ENCODE measurements at regions of chr2 and their contacts with region 1.

Region 1: GRCh38 chr2:88669371-88670214 is 21.9 kb upstream of the RPIA start:
- DNase-seq: peak; percentile 53
- H3K4me3 ChIP-seq: no peak overlapping the region
- H3K27ac ChIP-seq: no peak overlapping the region
- H3K4me1 ChIP-seq: no peaks in the 10 kb centered on the region
- H3K27me3 ChIP-seq: no peaks in the 10 kb centered on the region
- CTCF ChIP-seq: peak; percentile 72
- EP300 ChIP-seq: no peak
- RAD21 ChIP-seq: peak; percentile 81

Region 2: GRCh38 chr2:88136817-88137216 is 532.8 kb before region 1 on chr2:
- CTCF ChIA-PET with region 1: no interaction called
- POLR2A ChIA-PET with region 1: no interaction called
- DNase-seq: no peak
- H3K4me3 ChIP-seq: no peak overlapping the region
- H3K27ac ChIP-seq: no peak overlapping the region
- H3K4me1 ChIP-seq: no peaks in the 10 kb centered on the region
- H3K27me3 ChIP-seq: no peaks in the 10 kb centered on the region; the same call in 1 of the 2 replicates
- CTCF ChIP-seq: no peak
- EP300 ChIP-seq: no peak
- RAD21 ChIP-seq: no peak

Region 3: GRCh38 chr2:88574445-88574844 is 95.1 kb before region 1 on chr2:
- CTCF ChIA-PET with region 1: interaction called, 13 read pairs
- POLR2A ChIA-PET with region 1: no interaction called
- DNase-seq: no peak
- H3K4me3 ChIP-seq: no peak overlapping the region
- H3K27ac ChIP-seq: no peak overlapping the region; a peak in 2 of 4 replicates
- H3K4me1 ChIP-seq: 0 out of 4 replicates have a peak, but pooled peaks cover 0 to 5% of the 10 kb centered on the region in 2 experiments
- H3K27me3 ChIP-seq: no peaks in the 10 kb centered on the region
- CTCF ChIP-seq: no peak
- EP300 ChIP-seq: no peak
- RAD21 ChIP-seq: no peak

Region 4: GRCh38 chr2:88590998-88591613 is 78.5 kb before region 1 on chr2:
- CTCF ChIA-PET with region 1: interaction called, 308 read pairs
- POLR2A ChIA-PET with region 1: no interaction called
- DNase-seq: peak; percentile 47
- H3K4me3 ChIP-seq: no peak overlapping the region; a peak in 1 of 4 replicates
- H3K27ac ChIP-seq: peak overlapping the region; percentile 12 to 67; a peak in 3 of 4 replicates
- H3K4me1 ChIP-seq: no peaks in the 10 kb centered on the region; a peak in 1 of 4 replicates
- H3K27me3 ChIP-seq: no peaks in the 10 kb centered on the region
- CTCF ChIP-seq: peak; percentile 91
- EP300 ChIP-seq: no peak
- RAD21 ChIP-seq: peak; percentile 96

Region 5: GRCh38 chr2:88606371-88607030 is 63.1 kb before region 1 on chr2:
- CTCF ChIA-PET with region 1: interaction called, 13 read pairs
- POLR2A ChIA-PET with region 1: no interaction called
- DNase-seq: no peak
- H3K4me3 ChIP-seq: no peak overlapping the region
- H3K27ac ChIP-seq: peak overlapping the region in 1 of 2 experiments; percentile 62; a peak in 2 of 4 replicates
- H3K4me1 ChIP-seq: peaks cover 9 to 30% of the 10 kb centered on the region in 2 experiments
- H3K27me3 ChIP-seq: no peaks in the 10 kb centered on the region
- CTCF ChIP-seq: no peak
- EP300 ChIP-seq: no peak
- RAD21 ChIP-seq: no peak

Region 6: DNA sequence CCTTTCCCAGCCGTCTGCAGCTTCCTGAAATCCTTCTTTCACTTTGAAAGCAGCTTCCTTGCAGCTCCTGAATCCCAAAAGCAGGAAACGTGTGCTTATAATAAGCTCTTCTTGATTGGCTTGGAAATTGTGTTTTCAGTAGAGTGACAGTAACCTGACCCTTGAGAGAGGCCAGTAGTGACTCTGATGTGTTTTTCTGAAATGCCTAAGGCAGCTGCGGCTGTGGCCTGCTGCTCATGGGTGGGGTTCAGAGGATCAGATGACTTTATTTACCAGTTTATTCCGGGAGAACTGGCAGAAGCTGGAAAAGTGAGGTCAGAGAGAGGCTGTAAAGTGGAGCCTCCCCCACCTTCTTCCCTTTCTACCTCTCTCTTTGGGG is 10.1 kb before region 1 on chr2:
- CTCF ChIA-PET with region 1: interaction called, 32 read pairs
- POLR2A ChIA-PET with region 1: no interaction called
- DNase-seq: no peak
- H3K4me3 ChIP-seq: no peak overlapping the region
- H3K27ac ChIP-seq: peak overlapping the region; percentile 68 to 88; a peak in 3 of 4 replicates
- H3K4me1 ChIP-seq: peaks cover 0 to 19% of the 10 kb centered on the region in 2 experiments; a peak in 2 of 4 replicates
- H3K27me3 ChIP-seq: no peaks in the 10 kb centered on the region
- CTCF ChIP-seq: no peak
- EP300 ChIP-seq: no peak
- RAD21 ChIP-seq: no peak

Region 7: DNA sequence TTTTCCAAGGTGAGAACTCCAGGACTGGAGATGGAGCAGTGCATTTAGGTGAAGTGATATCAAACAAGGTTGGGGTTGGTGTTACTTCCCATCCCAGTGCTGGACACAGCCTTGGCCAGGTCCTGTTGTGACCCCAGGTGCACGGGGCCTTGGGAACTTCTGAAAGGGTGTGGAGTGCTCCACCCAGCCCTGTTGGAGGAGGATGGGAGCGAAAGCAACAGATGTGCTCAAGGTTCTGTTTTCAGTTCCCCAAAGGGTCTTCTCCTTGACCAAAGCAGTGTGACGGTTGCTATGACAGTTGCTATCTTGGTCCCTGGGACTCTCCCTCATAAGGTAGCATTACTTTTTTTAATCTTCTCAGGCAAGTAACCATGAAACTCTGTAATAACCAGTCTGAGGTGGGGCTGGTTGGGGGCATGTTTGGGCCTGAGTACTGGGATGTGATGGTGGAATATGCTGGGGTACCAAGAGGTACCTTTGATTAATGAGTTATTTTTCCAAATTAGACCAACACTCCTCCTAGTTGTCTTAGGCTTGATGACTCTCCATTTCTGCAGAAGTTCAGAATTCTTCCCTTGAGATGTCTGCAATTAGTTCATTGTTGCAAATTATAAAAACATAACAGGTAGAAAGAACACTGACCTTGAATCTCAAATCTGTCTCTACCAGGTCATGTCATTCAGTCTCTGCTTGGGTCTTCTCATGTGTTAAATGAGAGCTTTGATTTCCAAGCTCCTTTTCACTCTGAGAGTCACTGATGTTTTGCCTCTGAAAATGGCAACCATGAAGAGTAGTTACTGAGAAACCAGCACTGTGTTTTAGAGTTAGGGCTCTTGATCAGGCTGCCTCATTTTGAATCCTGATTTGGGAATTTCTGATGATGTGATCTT is 176.4 kb after region 1 on chr2:
- CTCF ChIA-PET with region 1: no interaction called
- POLR2A ChIA-PET with region 1: no interaction called
- DNase-seq: no peak
- H3K4me3 ChIP-seq: no peak overlapping the region
- H3K27ac ChIP-seq: no peak overlapping the region
- H3K4me1 ChIP-seq: no peaks in the 10 kb centered on the region
- H3K27me3 ChIP-seq: no peaks in the 10 kb centered on the region; the same call in 1 of the 2 replicates
- CTCF ChIP-seq: no peak
- EP300 ChIP-seq: no peak
- RAD21 ChIP-seq: no peak

Measured in SK-N-SH (cell line).